ENCODE measurements at regions of chr17 and their contacts with region 1.

Region 1: GRCh38 chr17:9072696-9073339 is 51.5 kb downstream of the NTN1 start:
- DNase-seq: peak; percentile 64 to 76
- ATAC-seq: peak; percentile 11 to 72 (median 55)
- H3K4me3 ChIP-seq: peak overlapping the region in 2 of 10 donors; percentile 5 to 24
- H3K27ac ChIP-seq: peak overlapping the region in 8 of 10 donors; percentile 2 to 69 (median 48)
- H3K4me1 ChIP-seq: peaks cover 8 to 42% (median 29%) of the 10 kb centered on the region in 9 donors
- H3K27me3 ChIP-seq: no peaks in the 10 kb centered on the region
- CTCF ChIP-seq: no peak

Region 2: GRCh38 chr17:8946476-8946875 is 126.3 kb before region 1 on chr17:
- intact Hi-C with region 1: no loop called
- DNase-seq: no peak
- ATAC-seq: no peak
- H3K4me3 ChIP-seq: no peak overlapping the region
- H3K27ac ChIP-seq: no peak overlapping the region
- H3K4me1 ChIP-seq: peaks cover 0 to 58% (median 0%) of the 10 kb centered on the region in 9 donors
- H3K27me3 ChIP-seq: peaks cover 0 to 33% (median 9%) of the 10 kb centered on the region in 7 donors
- CTCF ChIP-seq: no peak

Region 3: DNA sequence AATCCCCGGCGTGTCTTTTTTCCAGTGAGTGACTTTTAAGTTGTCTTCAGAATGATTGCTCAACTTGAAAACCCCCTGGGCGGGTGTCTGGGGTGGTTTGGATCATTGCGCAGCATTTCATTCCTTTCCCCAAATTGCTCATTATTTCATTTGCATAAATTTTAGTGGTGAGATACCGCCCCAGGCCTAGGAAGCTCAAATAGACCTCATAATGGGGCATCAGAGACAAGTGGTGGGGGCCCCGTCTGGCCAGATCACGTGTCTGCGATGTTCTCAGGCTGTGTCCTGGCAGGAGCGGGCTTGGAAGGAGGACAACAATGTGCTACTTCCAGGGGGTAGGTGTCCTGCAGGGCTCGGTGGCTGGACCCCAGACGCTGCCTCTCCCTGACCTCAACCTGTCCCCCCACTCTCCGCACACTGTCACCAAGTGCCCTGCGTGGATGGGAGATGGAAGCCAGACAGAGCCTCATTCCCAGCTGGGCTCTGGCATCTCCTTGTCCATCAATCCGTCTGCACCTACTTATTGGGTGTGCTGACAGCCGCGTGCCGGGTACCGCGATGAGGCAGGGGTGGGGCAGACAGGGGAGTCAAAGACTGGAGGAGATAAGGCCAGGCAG is 65.4 kb after region 1 on chr17:
- intact Hi-C with region 1: loop called in 1 of 10 experiments (anchors 10 kb)
- DNase-seq: peak; percentile 62 to 75
- ATAC-seq: peak; percentile 85 to 94 (median 90)
- H3K4me3 ChIP-seq: no peak overlapping the region
- H3K27ac ChIP-seq: no peak overlapping the region
- H3K4me1 ChIP-seq: peaks cover 0 to 11% (median 0%) of the 10 kb centered on the region in 9 donors
- H3K27me3 ChIP-seq: no peaks in the 10 kb centered on the region
- CTCF ChIP-seq: no peak

Region 4: DNA sequence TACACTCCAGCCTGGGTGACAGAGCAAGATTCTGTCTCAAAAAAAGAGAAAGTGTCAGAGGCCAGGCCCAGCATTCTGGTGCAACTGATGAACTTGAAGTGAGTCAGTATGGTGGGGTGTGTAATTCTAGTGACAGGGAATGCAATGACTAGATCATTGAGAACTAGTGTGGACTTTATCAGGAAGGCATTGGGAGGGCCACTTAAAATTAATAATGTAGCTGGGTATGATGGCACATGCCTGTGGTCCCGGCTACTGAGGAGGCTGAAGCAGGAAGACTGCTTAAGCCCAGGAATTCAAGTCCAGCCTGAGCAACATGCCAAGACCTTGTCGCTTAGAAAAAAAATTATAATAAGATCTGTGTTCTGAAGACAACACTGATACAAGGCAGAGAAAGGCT is 412.0 kb after region 1 on chr17:
- intact Hi-C with region 1: no loop called
- DNase-seq: no peak
- ATAC-seq: no peak
- H3K4me3 ChIP-seq: no peak overlapping the region
- H3K27ac ChIP-seq: no peak overlapping the region
- H3K4me1 ChIP-seq: no peaks in the 10 kb centered on the region
- H3K27me3 ChIP-seq: no peaks in the 10 kb centered on the region
- CTCF ChIP-seq: no peak